ENCODE measurements at regions of chr11 and their contacts with region 1.

Region 1: DNA sequence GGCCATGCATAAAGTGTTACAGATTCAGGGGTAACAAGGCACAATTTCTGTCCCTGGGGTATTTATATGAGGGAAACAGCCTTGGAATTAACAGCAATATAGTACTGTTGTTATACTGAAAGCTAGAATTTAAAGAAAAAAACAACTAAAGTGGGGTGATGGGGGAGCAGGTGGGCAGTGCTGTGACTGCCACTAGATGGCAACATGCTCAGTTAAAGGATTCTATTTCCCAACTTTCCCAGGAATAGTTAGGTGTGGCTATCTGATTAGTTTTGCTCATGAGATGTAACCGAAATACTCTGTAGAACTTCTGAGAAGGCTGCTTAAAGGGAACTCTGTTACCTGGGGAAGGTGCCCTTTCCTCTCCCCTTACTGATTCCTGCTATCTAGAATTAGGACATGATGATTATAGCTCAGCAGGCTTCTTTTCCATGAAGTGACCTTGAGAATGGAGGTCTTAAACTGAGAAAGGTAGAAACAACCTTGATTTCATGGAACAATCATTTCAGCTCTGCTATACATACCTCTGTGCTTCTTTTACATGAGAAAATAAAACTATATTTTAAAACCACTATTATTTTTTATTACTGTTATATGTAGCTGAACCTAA is 102.6 kb downstream of the RELT start:
- DNase-seq: no peak
- ATAC-seq: no peak
- H3K4me3 Mint-ChIP-seq: no peak overlapping the region
- H3K27ac Mint-ChIP-seq: no peak overlapping the region
- H3K4me1 Mint-ChIP-seq: no peaks in the 10 kb centered on the region
- H3K27me3 Mint-ChIP-seq: peaks cover 2% of the 10 kb centered on the region

Region 2: GRCh38 chr11:73465023-73465675 is 13.7 kb before region 1 on chr11:
- CTCF ChIA-PET with region 1: interaction called, 16 read pairs
- POLR2A ChIA-PET with region 1: no interaction called
- DNase-seq: no peak
- ATAC-seq: no peak
- H3K4me3 Mint-ChIP-seq: no peak overlapping the region
- H3K27ac Mint-ChIP-seq: no peak overlapping the region
- H3K4me1 Mint-ChIP-seq: peaks cover 6% of the 10 kb centered on the region
- H3K27me3 Mint-ChIP-seq: no peaks in the 10 kb centered on the region